Gastrocnemius medialis (tissue), 4 donors: ENCODE measurements at regions of chr12 and their contacts with region 1.

Region 1: DNA sequence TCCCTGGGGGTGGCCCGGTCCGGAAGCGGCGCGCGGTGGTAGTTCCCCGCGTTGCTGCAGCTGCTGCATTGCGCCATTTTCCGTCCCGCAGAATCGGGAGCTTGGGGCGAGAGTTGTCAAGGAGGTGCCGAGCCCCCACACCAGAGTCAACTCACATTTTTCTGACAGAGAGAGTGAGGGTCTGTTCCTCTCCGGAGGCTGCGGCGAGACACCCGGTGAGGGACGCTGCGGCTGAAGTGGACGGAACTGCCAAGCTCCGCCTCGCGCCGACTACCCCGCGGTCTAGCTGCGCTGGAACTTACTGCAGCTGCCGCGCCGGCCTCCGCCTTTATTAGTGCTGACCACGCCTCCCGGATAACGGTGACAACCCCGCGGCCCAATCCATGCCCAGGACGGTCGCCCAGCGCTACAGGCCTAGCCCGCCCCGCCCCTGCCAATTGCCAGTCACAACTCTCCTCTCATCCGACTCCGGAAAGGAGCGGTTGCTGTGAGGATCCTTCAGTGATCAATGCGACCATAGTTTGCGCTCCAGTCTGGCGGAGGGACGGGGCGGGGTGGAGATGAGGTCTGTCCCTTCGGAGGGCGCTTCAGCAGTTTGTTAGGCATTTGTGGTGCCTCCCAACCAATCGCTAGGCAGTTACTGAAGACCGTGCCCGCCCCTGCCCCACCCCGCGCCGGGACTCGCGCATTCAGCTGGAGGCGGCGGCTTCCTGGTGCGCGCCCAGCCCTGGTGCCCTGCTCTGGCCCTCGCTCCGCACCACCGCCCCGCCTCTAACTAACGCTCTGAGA is at the start of gene VAMP1:
- DNase-seq: peak; percentile 97 to 98
- ATAC-seq: peak; percentile 91 to 94
- H3K4me3 ChIP-seq: peak within 1 kb of the TSS; percentile 81 to 90 (median 86)
- H3K27ac ChIP-seq: peak within 1 kb of the TSS; percentile 84 to 96 (median 93)
- H3K4me1 ChIP-seq: peaks cover 21 to 23% of the 10 kb centered on the region in 2 donors
- H3K27me3 ChIP-seq: no peaks in the 10 kb centered on the region
- CTCF ChIP-seq: peak in 3 of 5 experiments; percentile 15 to 24 (median 19)
- POLR2A ChIP-seq: peak; percentile 98 to 100
- total RNA-seq, gene VAMP1: 1.1 to 2.0 (median 1.4) TPM

Region 2: GRCh38 chr12:6335451-6336078 is 135.0 kb before region 1 on chr12:
- in situ Hi-C with region 1: loop called in 3 of 4 experiments (anchors 5 to 25 kb)
- intact Hi-C with region 1: no loop called
- DNase-seq: peak; percentile 69 to 83
- ATAC-seq: peak; percentile 48 to 50
- H3K4me3 ChIP-seq: peak overlapping the region; percentile 58 to 99 (median 78)
- H3K27ac ChIP-seq: peak overlapping the region; percentile 92 to 99 (median 96)
- H3K4me1 ChIP-seq: peaks cover 56 to 59% of the 10 kb centered on the region in 2 donors
- H3K27me3 ChIP-seq: no peaks in the 10 kb centered on the region
- CTCF ChIP-seq: peak in 4 of 5 experiments; percentile 40 to 66 (median 59)
- POLR2A ChIP-seq: no peak

Region 3: GRCh38 chr12:6407236-6407954 is 63.2 kb before region 1 on chr12:
- in situ Hi-C with region 1: no loop called
- intact Hi-C with region 1: no loop called
- DNase-seq: no peak
- ATAC-seq: no peak
- H3K4me3 ChIP-seq: no peak overlapping the region
- H3K27ac ChIP-seq: no peak overlapping the region
- H3K4me1 ChIP-seq: no peaks in the 10 kb centered on the region
- H3K27me3 ChIP-seq: no peaks in the 10 kb centered on the region
- CTCF ChIP-seq: no peak
- POLR2A ChIP-seq: no peak

Region 4: DNA sequence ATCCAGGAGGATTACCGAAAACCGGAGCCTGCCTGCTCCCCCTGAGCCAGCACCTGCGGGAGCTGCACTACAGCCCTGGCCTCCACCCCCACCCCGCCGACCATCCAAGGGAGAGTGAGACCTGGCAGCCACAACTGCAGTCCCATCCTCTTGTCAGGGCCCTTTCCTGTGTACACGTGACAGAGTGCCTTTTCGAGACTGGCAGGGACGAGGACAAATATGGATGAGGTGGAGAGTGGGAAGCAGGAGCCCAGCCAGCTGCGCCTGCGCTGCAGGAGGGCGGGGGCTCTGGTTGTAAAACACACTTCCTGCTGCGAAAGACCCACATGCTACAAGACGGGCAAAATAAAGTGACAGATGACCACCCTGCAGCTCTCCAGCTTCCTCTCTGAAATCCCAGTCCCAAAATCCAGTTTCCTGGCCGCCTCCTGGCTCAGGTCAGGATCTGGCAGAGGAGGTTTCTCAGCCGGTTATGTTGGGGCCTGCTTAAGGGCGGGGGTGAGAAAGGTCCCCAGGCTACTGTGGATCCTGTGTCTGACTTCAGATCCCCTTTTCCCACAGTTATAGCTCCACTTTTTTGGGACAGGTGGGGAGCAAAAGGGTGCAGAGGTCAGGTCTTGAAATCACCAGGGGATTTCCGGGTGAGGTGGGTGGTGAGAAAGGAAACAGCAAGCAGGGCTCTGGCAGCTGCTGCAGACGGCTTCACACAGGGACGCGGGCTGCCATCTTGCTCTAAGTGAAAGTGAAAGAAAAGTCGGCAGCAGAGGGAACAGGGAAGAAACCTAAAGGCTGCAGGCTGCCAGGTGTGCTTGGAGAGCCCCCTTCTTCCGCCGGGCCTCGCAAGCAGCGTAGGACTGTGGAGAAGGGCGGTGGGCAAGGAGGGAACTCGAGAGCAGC is 19.0 kb before region 1 on chr12 and contains the start of gene TAPBPL:
- in situ Hi-C with region 1: no loop called
- intact Hi-C with region 1: loop called (anchors 1 kb)
- DNase-seq: peak; percentile 68 to 85
- ATAC-seq: peak; percentile 79 to 90
- H3K4me3 ChIP-seq: peak within 1 kb of the TSS; percentile 72 to 91 (median 84)
- H3K27ac ChIP-seq: peak within 1 kb of the TSS; percentile 96 to 99 (median 98)
- H3K4me1 ChIP-seq: peaks cover 18% of the 10 kb centered on the region in 2 donors
- H3K27me3 ChIP-seq: no peaks in the 10 kb centered on the region
- CTCF ChIP-seq: no peak
- POLR2A ChIP-seq: peak; percentile 60 to 66
- total RNA-seq, gene TAPBPL: 3.8 to 8.6 (median 5.8) TPM

Region 5: DNA sequence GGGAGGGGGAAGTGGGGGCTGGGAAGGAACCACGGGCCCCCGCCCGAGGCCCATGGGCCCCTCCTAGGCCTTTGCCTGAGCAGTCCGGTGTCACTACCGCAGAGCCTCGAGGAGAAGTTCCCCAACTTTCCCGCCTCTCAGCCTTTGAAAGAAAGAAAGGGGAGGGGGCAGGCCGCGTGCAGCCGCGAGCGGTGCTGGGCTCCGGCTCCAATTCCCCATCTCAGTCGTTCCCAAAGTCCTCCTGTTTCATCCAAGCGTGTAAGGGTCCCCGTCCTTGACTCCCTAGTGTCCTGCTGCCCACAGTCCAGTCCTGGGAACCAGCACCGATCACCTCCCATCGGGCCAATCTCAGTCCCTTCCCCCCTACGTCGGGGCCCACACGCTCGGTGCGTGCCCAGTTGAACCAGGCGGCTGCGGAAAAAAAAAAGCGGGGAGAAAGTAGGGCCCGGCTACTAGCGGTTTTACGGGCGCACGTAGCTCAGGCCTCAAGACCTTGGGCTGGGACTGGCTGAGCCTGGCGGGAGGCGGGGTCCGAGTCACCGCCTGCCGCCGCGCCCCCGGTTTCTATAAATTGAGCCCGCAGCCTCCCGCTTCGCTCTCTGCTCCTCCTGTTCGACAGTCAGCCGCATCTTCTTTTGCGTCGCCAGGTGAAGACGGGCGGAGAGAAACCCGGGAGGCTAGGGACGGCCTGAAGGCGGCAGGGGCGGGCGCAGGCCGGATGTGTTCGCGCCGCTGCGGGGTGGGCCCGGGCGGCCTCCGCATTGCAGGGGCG is 63.5 kb after region 1 on chr12 and contains the start of gene GAPDH:
- in situ Hi-C with region 1: no loop called
- intact Hi-C with region 1: loop called (anchors 1 kb)
- DNase-seq: peak; percentile 89 to 93
- ATAC-seq: peak; percentile 66 to 70
- H3K4me3 ChIP-seq: peak within 1 kb of the TSS; percentile 75 to 87 (median 76)
- H3K27ac ChIP-seq: peak within 1 kb of the TSS; percentile 91 to 97 (median 96)
- H3K4me1 ChIP-seq: peaks cover 35 to 47% of the 10 kb centered on the region in 2 donors
- H3K27me3 ChIP-seq: no peaks in the 10 kb centered on the region
- CTCF ChIP-seq: peak in 1 of 5 experiments; percentile 3
- POLR2A ChIP-seq: peak; percentile 95 to 96
- total RNA-seq, gene GAPDH: 11,241 to 15,891 (median 13,472) TPM

Region 6: DNA sequence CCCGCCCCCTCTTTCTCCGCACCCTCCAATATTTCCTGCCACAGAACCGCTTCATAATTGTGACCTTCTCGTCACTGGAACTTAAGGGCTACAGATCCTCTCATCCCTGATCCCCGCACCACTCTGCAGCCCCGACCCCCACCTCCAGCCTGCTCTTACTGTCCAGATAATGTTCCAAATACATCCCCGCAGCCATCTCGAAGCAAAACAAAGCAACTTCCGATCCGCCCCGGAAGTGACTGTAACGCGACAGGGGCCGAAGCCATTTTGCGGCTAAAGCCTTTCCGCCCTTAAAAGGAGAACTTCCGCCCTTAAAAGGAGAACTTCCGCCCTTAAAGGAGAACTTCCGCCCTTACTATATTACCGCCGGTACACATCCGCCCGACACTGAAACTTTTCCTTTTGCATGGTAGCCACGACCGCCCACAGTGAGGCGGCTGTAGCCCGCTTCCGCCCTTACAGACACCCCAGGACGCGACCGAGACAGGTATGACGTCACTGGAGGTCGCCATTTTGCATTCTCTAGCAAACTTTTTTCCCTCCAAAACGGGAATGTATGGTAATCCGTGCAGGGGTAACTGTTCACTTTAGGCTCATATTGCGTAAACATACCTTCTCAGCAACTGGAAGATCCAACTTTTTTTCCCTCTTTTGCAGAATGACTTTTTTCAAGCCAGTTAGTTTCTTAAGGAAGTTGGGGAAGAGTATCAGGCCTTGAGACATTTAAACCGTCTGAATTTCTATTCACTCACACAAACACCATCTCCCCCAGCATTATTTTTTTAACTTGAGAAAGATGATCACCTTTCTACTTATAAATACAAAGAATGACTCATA is 192.6 kb after region 1 on chr12 and contains the start of gene ING4:
- in situ Hi-C with region 1: no loop called
- intact Hi-C with region 1: loop called (anchors 1 kb)
- DNase-seq: peak; percentile 97 to 99
- ATAC-seq: peak; percentile 100
- H3K4me3 ChIP-seq: peak within 1 kb of the TSS; percentile 66 to 97 (median 81)
- H3K27ac ChIP-seq: peak within 1 kb of the TSS; percentile 78 to 84 (median 80)
- H3K4me1 ChIP-seq: peaks cover 12 to 18% of the 10 kb centered on the region in 2 donors
- H3K27me3 ChIP-seq: no peaks in the 10 kb centered on the region
- CTCF ChIP-seq: no peak
- POLR2A ChIP-seq: no peak
- total RNA-seq, gene ING4: 12.8 to 28.9 (median 19.7) TPM